ENCODE measurements at regions of chr18 and their contacts with region 1.

Region 1: DNA sequence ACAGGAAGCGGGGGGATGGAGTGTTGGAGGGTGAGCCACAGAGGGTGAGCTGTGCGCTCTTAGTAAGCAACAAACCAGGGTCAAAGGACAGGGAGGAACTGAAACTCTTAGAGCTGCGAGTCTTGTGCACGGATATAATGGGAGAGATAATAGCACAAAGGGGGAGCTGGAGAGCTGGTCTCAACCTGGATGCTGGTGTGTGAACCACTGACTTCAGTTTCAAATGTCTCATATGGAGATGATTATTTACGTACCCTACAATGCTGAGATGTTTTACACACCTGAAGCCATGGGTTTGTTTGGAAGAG is 35.9 kb downstream of the PTGR3 start:
- DNase-seq: no peak
- H3K4me3 ChIP-seq: no peak overlapping the region
- H3K27ac ChIP-seq: no peak overlapping the region
- H3K27me3 ChIP-seq: peaks cover 0 to 10% (median 0%) of the 10 kb centered on the region in 45 donors
- CTCF ChIP-seq: peak in 1 of 56 donors; percentile 8

Region 2: DNA sequence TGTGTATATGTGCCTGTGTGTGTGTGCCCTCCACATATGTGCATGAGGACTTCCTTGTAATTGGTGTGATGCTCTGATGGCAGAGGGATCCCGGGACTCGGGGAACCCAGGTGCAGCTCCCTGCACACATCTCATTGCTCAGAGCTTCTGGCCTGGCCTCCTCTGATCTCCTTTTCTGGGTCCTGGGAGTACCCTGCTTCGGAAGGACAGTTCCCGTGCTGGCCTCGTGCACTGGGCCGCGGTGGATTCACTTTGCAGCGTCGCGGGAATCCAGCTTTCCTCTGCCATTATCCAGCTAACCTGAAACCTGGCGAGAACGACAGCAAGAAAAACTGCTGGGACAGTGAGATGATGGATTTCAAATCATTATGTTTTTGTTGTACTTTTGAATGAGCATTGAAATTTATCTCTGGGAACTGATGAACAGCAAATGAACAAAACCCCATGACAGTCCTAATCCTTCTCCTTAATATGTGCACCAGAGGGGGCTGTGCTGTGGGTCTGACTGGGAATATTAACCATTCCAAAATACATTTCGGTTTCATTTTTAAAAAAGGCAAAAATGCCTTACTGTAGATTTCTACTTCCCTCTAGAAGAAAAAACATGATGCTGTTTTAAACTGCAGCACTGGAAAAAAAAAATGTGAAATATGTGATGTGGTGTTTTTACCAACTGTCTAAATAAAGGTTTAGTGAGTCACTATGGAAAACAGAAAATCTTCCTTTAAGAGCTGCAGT is 42.3 kb before region 1 on chr18:
- intact Hi-C with region 1: no loop called
- DNase-seq: no peak
- H3K4me3 ChIP-seq: peak overlapping the region in 34 of 59 donors; percentile 1 to 46 (median 22)
- H3K27ac ChIP-seq: peak overlapping the region in 25 of 59 donors; percentile 15 to 68 (median 39)
- H3K27me3 ChIP-seq: peaks cover 0 to 6% (median 0%) of the 10 kb centered on the region in 45 donors
- CTCF ChIP-seq: peak in 11 of 56 donors; percentile 7 to 18 (median 14)

Region 3: DNA sequence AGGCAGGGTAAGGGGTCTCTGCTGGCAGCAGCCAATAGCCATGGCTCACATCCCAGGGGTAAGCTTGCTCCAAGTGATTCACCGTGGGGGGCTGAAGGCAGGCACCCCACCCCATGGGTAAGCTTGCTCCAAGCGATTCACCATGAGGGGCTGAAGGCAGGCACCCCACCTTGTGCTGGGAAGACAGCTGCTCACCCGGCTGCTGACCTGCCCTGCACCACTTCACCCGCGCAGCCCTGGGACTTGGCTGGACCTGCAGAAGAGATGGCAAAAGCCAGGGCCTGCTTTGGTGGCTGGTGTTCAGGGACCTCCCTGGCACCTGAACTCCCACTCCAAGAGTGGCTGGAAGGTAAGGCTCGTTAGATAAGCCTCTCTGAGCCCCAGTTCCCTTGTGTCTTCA is 16.6 kb after region 1 on chr18:
- intact Hi-C with region 1: loop called in 1 of 2 experiments (anchors 2 kb)
- DNase-seq: no peak
- H3K4me3 ChIP-seq: no peak overlapping the region
- H3K27ac ChIP-seq: no peak overlapping the region
- H3K27me3 ChIP-seq: peaks cover 0 to 3% (median 0%) of the 10 kb centered on the region in 45 donors
- CTCF ChIP-seq: no peak

Region 4: DNA sequence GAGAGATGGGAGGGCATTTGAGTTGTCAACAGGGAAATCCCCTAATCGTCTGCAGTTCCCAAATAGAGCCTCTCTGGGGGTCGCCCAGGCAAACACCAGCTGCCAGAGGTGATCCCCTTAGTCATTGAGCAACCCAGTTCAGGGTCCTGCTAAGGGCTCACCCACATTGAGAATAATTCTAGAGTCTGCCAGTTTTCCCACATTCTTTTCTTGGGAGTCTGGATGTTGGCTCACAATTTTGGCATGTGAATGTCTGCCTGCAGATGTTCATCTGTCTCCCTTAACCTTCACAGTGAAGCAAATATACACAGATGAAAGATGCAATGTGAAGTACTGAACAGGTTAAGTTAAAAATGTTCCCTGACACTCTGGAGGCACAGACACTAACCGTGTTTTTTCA is 265.8 kb after region 1 on chr18:
- intact Hi-C with region 1: no loop called
- DNase-seq: no peak
- H3K4me3 ChIP-seq: no peak overlapping the region
- H3K27ac ChIP-seq: no peak overlapping the region
- H3K27me3 ChIP-seq: peaks cover 0 to 25% (median 0%) of the 10 kb centered on the region in 45 donors
- CTCF ChIP-seq: no peak

Measured in dorsolateral prefrontal cortex (tissue), 120 donors.